ENCODE measurements at regions of chr7 and their contacts with region 1.

Region 1: GRCh38 chr7:13279854-13280435 is 592.5 kb downstream of the ARL4A start:
- DNase-seq: no peak
- H3K4me3 ChIP-seq: no peak overlapping the region
- H3K27ac ChIP-seq: no peak overlapping the region
- H3K4me1 ChIP-seq: no peaks in the 10 kb centered on the region
- H3K27me3 ChIP-seq: no peaks in the 10 kb centered on the region
- CTCF ChIP-seq: peak in 2 of 4 experiments; percentile 16 to 45
- EP300 ChIP-seq: no peak
- POLR2A ChIP-seq: no peak

Region 2: DNA sequence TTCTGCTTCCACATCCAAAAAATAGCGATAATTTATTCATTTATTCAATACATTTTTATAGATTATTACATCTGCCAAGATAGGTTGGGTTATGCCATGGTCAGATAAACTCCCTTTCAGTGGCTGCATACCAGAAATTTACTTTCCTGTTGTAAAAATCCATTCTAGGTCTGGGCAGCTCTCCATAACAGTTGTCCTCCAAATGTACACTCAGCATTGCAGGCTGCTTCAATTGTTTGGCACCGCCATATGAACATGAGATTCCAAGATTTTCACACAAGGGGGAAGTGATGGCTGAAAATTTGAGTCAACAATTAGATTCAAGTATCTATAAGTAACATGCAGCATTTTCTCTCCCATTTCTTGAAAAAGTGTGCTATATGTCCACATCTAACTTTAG is 140.8 kb after region 1 on chr7:
- intact Hi-C with region 1: no loop called
- DNase-seq: no peak
- H3K4me3 ChIP-seq: no peak overlapping the region
- H3K27ac ChIP-seq: no peak overlapping the region
- H3K4me1 ChIP-seq: no peaks in the 10 kb centered on the region
- H3K27me3 ChIP-seq: no peaks in the 10 kb centered on the region
- CTCF ChIP-seq: no peak
- EP300 ChIP-seq: no peak
- POLR2A ChIP-seq: no peak

Region 3: GRCh38 chr7:14457568-14458453 is 1177.9 kb after region 1 on chr7:
- intact Hi-C with region 1: loop called (anchors 5 kb)
- DNase-seq: peak; percentile 69
- H3K4me3 ChIP-seq: no peak overlapping the region
- H3K27ac ChIP-seq: no peak overlapping the region
- H3K4me1 ChIP-seq: no peaks in the 10 kb centered on the region
- H3K27me3 ChIP-seq: no peaks in the 10 kb centered on the region
- CTCF ChIP-seq: peak in 3 of 4 experiments; percentile 55 to 85 (median 68)
- EP300 ChIP-seq: no peak
- POLR2A ChIP-seq: no peak

Region 4: DNA sequence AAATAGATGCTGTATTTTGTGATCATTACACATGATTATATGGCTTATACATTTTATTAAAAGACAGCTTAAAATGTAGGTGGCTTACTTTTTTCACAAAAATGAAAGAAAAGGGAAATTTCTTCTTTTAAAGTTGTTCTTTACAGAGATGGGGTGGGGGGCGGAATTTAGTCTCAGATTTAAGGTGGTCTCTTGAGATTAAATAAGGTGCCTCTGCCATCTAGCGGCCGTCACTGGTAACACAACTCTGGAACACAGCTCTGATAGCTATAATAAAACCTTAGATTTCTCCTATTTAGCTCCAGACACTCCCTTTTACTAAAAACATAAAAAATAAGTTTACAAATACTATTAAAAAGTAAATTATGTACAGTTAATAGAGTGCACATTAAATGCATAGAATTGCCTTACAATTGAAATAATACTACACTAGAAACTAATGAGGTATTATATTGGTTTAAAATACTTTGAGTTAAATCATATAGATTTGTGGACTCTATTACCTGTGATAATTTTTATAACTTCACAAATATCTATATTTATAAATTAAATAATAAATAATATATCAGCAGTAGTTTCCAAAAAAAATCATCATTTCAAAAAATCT is 1411.8 kb after region 1 on chr7:
- intact Hi-C with region 1: loop called (anchors 2 kb)
- DNase-seq: peak; percentile 67
- H3K4me3 ChIP-seq: no peak overlapping the region
- H3K27ac ChIP-seq: no peak overlapping the region
- H3K4me1 ChIP-seq: no peaks in the 10 kb centered on the region
- H3K27me3 ChIP-seq: no peaks in the 10 kb centered on the region
- CTCF ChIP-seq: peak in 3 of 4 experiments; percentile 65 to 85 (median 75)
- EP300 ChIP-seq: no peak
- POLR2A ChIP-seq: no peak

Measured in sigmoid colon (tissue), 7 donors.